CD8-positive, alpha-beta T cell (primary cell): ENCODE measurements at regions of chr13 and their contacts with region 1.

Region 1: DNA sequence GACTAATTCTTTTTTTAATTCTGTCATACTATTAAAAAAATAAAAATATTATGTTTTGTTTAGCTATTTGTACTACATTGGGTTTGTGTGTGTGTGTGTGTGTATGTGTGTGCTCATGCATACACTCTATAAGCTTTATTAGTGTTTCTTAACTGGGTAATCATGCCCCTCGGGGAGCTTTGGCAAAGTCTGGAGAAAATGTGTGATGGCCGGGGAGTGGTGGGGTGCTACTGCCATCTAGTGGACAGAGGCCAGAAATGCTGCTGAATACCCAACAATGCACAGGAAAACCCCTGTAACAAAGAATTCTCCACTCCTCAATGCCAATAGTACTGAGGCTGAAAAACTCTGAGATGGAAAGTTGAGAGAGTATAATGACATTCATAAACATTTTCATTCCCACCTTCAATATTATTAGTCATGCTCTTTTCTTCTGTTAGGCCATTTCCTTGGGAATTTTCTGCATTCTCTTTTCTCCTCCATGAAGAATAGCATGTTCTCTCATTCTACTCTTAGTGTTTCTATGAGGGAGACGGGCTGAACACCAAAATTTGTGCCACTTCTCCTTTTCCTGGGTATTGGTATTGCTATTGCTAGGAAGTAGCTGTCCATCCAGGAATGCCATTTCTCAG is 157.3 kb downstream of the DNAJC3 start:
- DNase-seq: peak; percentile 33 to 81 (median 64)
- ATAC-seq: peak; percentile 77
- H3K4me3 ChIP-seq: no peak overlapping the region
- H3K4me3 Mint-ChIP-seq: no peak overlapping the region
- H3K27ac ChIP-seq: no peak overlapping the region
- H3K27ac Mint-ChIP-seq: no peak overlapping the region
- H3K4me1 ChIP-seq: no peaks in the 10 kb centered on the region
- H3K4me1 Mint-ChIP-seq: no peaks in the 10 kb centered on the region
- H3K27me3 ChIP-seq: no peaks in the 10 kb centered on the region
- H3K27me3 Mint-ChIP-seq: peaks cover 4% of the 10 kb centered on the region
- CTCF ChIP-seq: peak; percentile 96

Region 2: DNA sequence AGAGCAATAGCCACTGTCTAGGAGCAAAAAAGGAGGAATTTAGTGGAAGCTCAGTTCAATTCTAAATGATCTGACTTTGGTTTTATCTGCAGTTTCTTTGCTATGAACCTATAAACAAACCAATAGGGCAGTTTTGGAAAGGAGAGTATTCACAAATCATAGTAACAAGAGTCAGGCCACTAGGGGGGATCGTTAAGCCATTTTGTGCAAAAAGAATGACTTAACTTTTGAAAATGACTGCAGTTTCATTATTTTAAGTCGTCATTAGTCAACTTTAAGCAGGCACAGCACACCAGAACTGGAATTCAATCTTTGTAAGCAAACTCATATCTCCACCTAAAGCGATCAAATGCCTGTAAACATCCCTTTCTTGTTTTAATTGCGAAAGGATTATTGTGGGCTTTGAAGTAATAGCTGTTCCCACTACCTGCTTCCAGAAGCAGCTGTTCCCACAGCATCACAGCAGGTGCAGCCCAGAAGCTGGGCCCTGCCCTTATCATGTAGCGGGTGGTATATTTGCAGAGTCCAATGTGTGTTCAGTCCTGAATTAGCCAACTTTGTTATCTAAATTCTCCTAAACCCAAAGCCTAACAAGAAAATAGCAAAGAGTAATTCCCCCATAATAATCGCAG is 1173.4 kb before region 1 on chr13:
- CTCF ChIA-PET with region 1: no interaction called
- POLR2A ChIA-PET with region 1: no interaction called
- intact Hi-C with region 1: loop called in 1 of 2 experiments (anchors 10 kb)
- DNase-seq: no peak
- ATAC-seq: no peak
- H3K4me3 ChIP-seq: no peak overlapping the region
- H3K4me3 Mint-ChIP-seq: no peak overlapping the region
- H3K27ac ChIP-seq: no peak overlapping the region
- H3K27ac Mint-ChIP-seq: no peak overlapping the region
- H3K4me1 ChIP-seq: no peaks in the 10 kb centered on the region
- H3K4me1 Mint-ChIP-seq: peaks cover 8% of the 10 kb centered on the region
- H3K27me3 ChIP-seq: no peaks in the 10 kb centered on the region
- H3K27me3 Mint-ChIP-seq: peaks cover 25% of the 10 kb centered on the region
- CTCF ChIP-seq: no peak

Region 3: DNA sequence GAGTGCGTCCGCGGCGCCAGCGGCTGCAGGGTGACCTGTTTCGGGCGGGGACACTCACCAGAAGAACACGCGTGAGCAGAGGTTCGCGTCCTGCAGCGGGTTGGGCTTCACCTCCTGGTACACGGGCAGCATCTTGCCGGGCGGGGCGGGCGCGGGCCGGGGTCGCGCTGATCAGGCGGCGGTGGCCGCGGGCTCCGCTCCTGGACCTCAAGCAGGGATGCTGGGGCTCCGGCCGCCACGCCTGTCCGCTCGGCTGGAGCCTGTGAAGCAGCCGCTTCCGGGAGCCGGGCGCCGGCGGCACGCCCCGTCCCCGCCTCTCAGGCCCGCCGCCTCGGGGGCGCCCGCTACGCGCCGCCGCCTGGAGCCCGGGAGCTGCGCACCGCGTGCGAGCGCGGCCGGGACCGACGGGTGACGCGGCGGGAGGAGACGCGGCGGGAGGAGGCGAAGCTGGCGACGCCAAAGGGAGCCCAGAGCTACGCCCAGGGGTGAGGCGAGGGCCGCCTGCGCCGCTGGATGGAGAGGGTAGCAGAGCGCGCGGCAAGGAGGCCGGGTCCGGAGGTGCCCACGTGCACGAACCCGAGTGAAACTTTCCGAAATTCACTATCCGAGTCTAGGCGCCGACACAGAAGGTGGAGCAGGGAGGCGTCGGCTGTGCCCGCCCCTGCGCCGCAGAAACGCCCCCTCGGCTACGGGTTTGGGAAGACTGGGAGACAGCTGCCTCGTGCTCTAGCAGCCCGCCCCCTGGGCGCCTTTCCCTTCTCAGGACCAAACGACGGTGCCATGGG is 532.9 kb before region 1 on chr13 and contains the start of gene ABCC4:
- CTCF ChIA-PET with region 1: no interaction called
- POLR2A ChIA-PET with region 1: no interaction called
- intact Hi-C with region 1: loop called in 1 of 2 experiments (anchors 10 kb)
- DNase-seq: peak in 8 of 9 experiments; percentile 33 to 75 (median 50)
- ATAC-seq: peak; percentile 77
- H3K4me3 ChIP-seq: peak within 1 kb of the TSS; percentile 74 to 79
- H3K4me3 Mint-ChIP-seq: peak within 1 kb of the TSS; percentile 82
- H3K27ac ChIP-seq: no peak within 1 kb of the TSS
- H3K27ac Mint-ChIP-seq: peak within 1 kb of the TSS; percentile 12
- H3K4me1 ChIP-seq: peaks cover 8% of the 10 kb centered on the region
- H3K4me1 Mint-ChIP-seq: peaks cover 24% of the 10 kb centered on the region
- H3K27me3 ChIP-seq: no peaks in the 10 kb centered on the region
- H3K27me3 Mint-ChIP-seq: no peaks in the 10 kb centered on the region
- CTCF ChIP-seq: no peak
- total RNA-seq, gene ABCC4: 3.3 to 3.4 TPM

Region 4: GRCh38 chr13:95494082-95494681 is 340.1 kb before region 1 on chr13:
- CTCF ChIA-PET with region 1: interaction called, 18 read pairs
- POLR2A ChIA-PET with region 1: interaction called, 3 read pairs
- intact Hi-C with region 1: loop called (anchors 1 kb)
- DNase-seq: peak in 2 of 9 experiments; percentile 53 to 56
- ATAC-seq: no peak
- H3K4me3 ChIP-seq: no peak overlapping the region
- H3K4me3 Mint-ChIP-seq: no peak overlapping the region
- H3K27ac ChIP-seq: no peak overlapping the region
- H3K27ac Mint-ChIP-seq: no peak overlapping the region
- H3K4me1 ChIP-seq: no peaks in the 10 kb centered on the region
- H3K4me1 Mint-ChIP-seq: no peaks in the 10 kb centered on the region
- H3K27me3 ChIP-seq: no peaks in the 10 kb centered on the region
- H3K27me3 Mint-ChIP-seq: peaks cover 2% of the 10 kb centered on the region
- CTCF ChIP-seq: peak; percentile 85

Region 5: DNA sequence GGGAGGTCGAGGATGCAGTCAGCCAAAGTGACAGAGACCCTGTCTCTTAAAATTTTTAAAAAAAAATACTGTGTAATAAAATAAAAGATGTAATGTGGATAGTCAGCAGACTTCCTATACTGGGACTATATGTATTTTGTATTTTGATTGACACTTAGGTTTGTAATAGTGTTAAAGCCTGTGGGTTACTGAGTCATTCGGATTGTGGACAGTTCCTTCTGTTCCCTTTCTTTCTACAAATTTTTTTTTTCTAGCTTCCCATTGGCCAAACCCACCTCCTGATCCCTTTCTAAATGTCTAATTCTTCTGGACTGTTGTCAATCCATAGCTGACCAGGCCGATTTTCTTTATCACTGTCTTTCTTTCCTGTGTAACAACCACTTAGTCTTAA is 49.4 kb before region 1 on chr13:
- CTCF ChIA-PET with region 1: interaction called, 4 read pairs
- POLR2A ChIA-PET with region 1: no interaction called
- intact Hi-C with region 1: loop called in 1 of 2 experiments (anchors 2 kb)
- DNase-seq: no peak
- ATAC-seq: no peak
- H3K4me3 ChIP-seq: no peak overlapping the region
- H3K4me3 Mint-ChIP-seq: no peak overlapping the region
- H3K27ac ChIP-seq: no peak overlapping the region
- H3K27ac Mint-ChIP-seq: no peak overlapping the region
- H3K4me1 ChIP-seq: no peaks in the 10 kb centered on the region
- H3K4me1 Mint-ChIP-seq: no peaks in the 10 kb centered on the region
- H3K27me3 ChIP-seq: no peaks in the 10 kb centered on the region
- H3K27me3 Mint-ChIP-seq: no peaks in the 10 kb centered on the region
- CTCF ChIP-seq: no peak

Region 6: GRCh38 chr13:96415831-96416385 is 581.7 kb after region 1 on chr13:
- CTCF ChIA-PET with region 1: no interaction called
- POLR2A ChIA-PET with region 1: no interaction called
- intact Hi-C with region 1: no loop called
- DNase-seq: no peak
- ATAC-seq: no peak
- H3K4me3 ChIP-seq: no peak overlapping the region
- H3K4me3 Mint-ChIP-seq: no peak overlapping the region
- H3K27ac ChIP-seq: no peak overlapping the region
- H3K27ac Mint-ChIP-seq: no peak overlapping the region
- H3K4me1 ChIP-seq: no peaks in the 10 kb centered on the region
- H3K4me1 Mint-ChIP-seq: no peaks in the 10 kb centered on the region
- H3K27me3 ChIP-seq: no peaks in the 10 kb centered on the region
- H3K27me3 Mint-ChIP-seq: no peaks in the 10 kb centered on the region
- CTCF ChIP-seq: no peak